HCT116 (cell line): ENCODE measurements at regions of chr21 and their contacts with region 1.

Region 1: DNA sequence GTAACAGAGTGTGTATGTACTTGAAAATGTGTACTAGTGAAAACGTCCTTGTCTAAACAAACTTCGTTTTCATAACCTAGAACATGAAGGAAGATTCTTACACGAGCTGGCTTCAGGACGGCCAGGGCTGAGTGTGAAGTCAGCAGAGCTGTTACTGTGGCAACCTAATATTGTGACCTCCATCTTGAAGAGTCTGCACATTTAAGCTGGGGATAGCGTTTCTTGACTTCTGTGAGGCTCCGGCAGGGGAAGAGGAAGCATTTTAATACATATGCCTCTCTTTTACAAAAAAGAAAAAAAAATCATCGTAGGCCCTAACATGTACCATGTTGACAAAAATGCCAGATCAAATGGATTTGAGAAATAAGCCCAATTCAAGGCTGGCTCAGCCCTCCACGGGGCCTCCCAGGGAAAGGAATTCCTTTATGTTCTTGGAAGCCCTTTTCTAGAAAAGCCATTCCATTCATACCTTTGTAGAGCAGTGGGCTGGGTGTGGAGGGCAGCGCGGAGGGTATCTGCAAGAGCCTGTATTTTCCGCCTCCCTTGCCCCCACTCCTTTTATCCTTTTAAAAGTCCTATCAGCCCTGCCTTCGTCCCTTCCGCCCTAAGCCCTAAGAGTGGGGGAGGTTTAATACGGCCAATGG is 51.1 kb downstream of the SIM2 start:
- DNase-seq: no peak
- ATAC-seq: no peak; the same call in 1 of the 2 replicates
- H3K4me3 ChIP-seq: no peak overlapping the region
- H3K27ac ChIP-seq: no peak overlapping the region
- H3K4me1 ChIP-seq: no peaks in the 10 kb centered on the region; a peak in 1 of 4 replicates
- H3K27me3 ChIP-seq: no peaks in the 10 kb centered on the region
- CTCF ChIP-seq: no peak
- POLR2A ChIP-seq: no peak
- RAD21 ChIP-seq: no peak

Region 2: GRCh38 chr21:36847171-36847570 is 97.1 kb after region 1 on chr21:
- CTCF ChIA-PET with region 1: no interaction called
- POLR2A ChIA-PET with region 1: no interaction called
- RAD21 ChIA-PET with region 1: no interaction called
- intact Hi-C with region 1: loop called (anchors 10 kb)
- DNase-seq: no peak
- ATAC-seq: peak; percentile 81
- H3K4me3 ChIP-seq: no peak overlapping the region
- H3K27ac ChIP-seq: peak overlapping the region; percentile 34; the same call in 1 of the 2 replicates
- H3K4me1 ChIP-seq: peaks cover 32 to 38% of the 10 kb centered on the region in 2 experiments
- H3K27me3 ChIP-seq: no peaks in the 10 kb centered on the region
- CTCF ChIP-seq: no peak
- POLR2A ChIP-seq: no peak
- RAD21 ChIP-seq: no peak

Region 3: GRCh38 chr21:37257967-37258877 is 508.2 kb after region 1 on chr21:
- CTCF ChIA-PET with region 1: no interaction called
- POLR2A ChIA-PET with region 1: no interaction called
- RAD21 ChIA-PET with region 1: no interaction called
- intact Hi-C with region 1: no loop called
- DNase-seq: no peak
- ATAC-seq: no peak
- H3K4me3 ChIP-seq: no peak overlapping the region
- H3K27ac ChIP-seq: no peak overlapping the region
- H3K4me1 ChIP-seq: no peaks in the 10 kb centered on the region
- H3K27me3 ChIP-seq: no peaks in the 10 kb centered on the region
- CTCF ChIP-seq: no peak
- POLR2A ChIP-seq: no peak
- RAD21 ChIP-seq: no peak